GM12878 (cell line): ENCODE measurements at regions of chr12 and their contacts with region 1.

Region 1: GRCh38 chr12:43282106-43282505 is 269.9 kb downstream of the ADAMTS20 start:
- DNase-seq: no peak
- ATAC-seq: no peak
- H3K4me3 ChIP-seq: no peak overlapping the region
- H3K27ac ChIP-seq: no peak overlapping the region
- H3K4me1 ChIP-seq: peaks cover 3% of the 10 kb centered on the region; the same call in 1 of the 2 replicates
- H3K27me3 ChIP-seq: no peaks in the 10 kb centered on the region
- CTCF ChIP-seq: peak in 2 of 3 experiments; percentile 8 to 16; a peak in 2 of 6 replicates
- EP300 ChIP-seq: no peak
- POLR2A ChIP-seq: no peak
- RAD21 ChIP-seq: peak; percentile 66

Region 2: DNA sequence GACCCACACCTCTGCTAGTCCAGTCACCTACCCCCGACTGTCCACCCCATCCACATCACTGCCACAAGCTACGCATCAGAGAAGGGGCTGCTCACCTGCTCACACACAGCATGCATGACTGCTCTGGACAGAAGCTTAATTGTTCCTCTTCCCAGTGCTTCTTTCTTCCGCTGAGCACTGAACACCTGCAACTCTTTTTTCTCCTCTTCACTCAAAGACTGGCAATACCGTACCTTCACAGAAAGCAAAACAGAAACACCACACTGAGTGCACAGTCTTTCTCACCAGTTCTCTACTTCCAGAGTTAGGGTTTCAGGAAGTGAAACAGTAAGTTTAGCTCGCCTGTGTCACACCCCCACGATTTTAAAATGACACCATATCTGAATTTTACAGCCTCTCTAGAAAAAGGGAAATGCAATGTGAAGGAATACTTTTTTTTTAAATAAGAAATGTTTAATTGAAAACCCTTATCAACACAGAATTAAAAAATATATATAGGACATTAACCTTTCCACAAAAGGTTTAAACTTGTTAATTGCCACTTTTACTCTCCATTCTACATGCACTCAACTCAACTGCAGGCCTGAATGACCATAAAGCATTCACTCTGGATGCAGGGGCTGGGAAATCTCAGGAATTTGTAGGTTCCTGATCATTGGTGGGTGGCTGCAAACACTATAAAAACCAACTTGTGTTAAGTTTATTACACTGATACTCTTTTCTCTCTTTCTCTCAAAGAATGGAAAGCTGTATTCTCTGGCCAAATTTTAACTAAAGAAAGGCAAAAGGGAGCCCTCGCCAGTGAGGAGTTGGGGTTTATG is 812.5 kb before region 1 on chr12:
- CTCF ChIA-PET with region 1: interaction called, 8 read pairs
- POLR2A ChIA-PET with region 1: no interaction called
- RAD21 ChIA-PET with region 1: interaction called, 5 read pairs
- SMC1A ChIA-PET with region 1: interaction called, 26 read pairs
- in situ Hi-C with region 1: no loop called
- intact Hi-C with region 1: no loop called
- DNase-seq: peak; percentile 97
- ATAC-seq: peak; percentile 96
- H3K4me3 ChIP-seq: peak overlapping the region; percentile 52
- H3K27ac ChIP-seq: peak overlapping the region; percentile 72
- H3K4me1 ChIP-seq: peaks cover 20% of the 10 kb centered on the region
- H3K27me3 ChIP-seq: no peaks in the 10 kb centered on the region
- CTCF ChIP-seq: no peak
- EP300 ChIP-seq: peak; percentile 57 to 87; a peak in 3 of 4 replicates
- POLR2A ChIP-seq: no peak
- RAD21 ChIP-seq: no peak

Region 3: DNA sequence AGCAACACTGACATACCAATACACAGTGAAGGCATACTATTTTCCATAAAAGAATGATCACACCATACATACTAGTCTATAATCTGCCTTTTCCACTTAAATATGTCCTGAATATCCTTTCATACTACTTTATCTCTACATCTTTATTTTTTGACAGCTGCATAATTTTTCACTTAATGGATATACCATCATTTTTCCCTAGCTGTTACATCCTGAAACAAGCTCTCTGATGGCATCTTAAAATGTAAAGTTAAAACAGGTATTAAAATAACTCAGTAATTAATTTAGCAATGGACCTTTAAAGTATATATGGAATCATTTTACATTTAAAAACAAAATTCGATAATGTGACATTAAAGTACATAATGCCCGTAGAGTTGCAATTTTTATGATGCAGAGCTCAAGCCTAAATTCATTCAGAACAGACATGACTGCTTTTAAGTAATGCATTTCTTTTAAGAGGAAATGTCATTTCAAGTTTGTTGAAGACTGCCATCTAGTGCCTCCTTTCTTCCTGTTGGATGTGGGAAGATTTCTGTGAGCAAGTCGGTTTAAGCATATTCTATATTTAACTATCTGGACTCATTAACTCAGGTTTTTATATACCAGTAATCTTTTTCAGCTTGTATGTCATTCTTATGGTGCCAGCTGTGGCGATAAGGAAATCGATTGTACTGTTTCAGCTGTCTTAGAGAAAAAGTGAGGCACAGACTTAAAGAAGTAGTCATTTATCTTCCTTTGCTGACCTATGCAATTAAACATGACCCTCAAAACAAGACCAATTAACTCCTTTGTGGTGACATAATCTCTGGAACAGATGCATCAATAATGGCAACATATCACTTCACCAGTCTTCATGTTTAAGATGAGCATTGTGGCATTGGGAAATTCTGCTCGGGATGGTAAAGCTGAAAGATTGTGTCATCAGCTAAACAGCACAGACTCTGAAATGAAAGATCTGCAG is 712.9 kb before region 1 on chr12:
- CTCF ChIA-PET with region 1: interaction called, 29 read pairs
- POLR2A ChIA-PET with region 1: no interaction called
- RAD21 ChIA-PET with region 1: interaction called, 15 read pairs
- SMC1A ChIA-PET with region 1: interaction called, 9 read pairs
- in situ Hi-C with region 1: no loop called
- intact Hi-C with region 1: loop called (anchors 5 kb)
- DNase-seq: peak; percentile 38
- ATAC-seq: peak; percentile 85
- H3K4me3 ChIP-seq: no peak overlapping the region
- H3K27ac ChIP-seq: no peak overlapping the region
- H3K4me1 ChIP-seq: no peaks in the 10 kb centered on the region; the same call in 1 of the 2 replicates
- H3K27me3 ChIP-seq: no peaks in the 10 kb centered on the region
- CTCF ChIP-seq: peak; percentile 54 to 66 (median 54); a peak in 5 of 6 replicates
- EP300 ChIP-seq: no peak
- POLR2A ChIP-seq: no peak
- RAD21 ChIP-seq: peak; percentile 80

Region 4: GRCh38 chr12:42759622-42760273 is 522.4 kb before region 1 on chr12:
- CTCF ChIA-PET with region 1: no interaction called
- POLR2A ChIA-PET with region 1: no interaction called
- RAD21 ChIA-PET with region 1: no interaction called
- SMC1A ChIA-PET with region 1: no interaction called
- in situ Hi-C with region 1: no loop called
- intact Hi-C with region 1: loop called (anchors 5 kb)
- DNase-seq: no peak
- ATAC-seq: no peak
- H3K4me3 ChIP-seq: no peak overlapping the region
- H3K27ac ChIP-seq: no peak overlapping the region
- H3K4me1 ChIP-seq: peaks cover 24% of the 10 kb centered on the region
- H3K27me3 ChIP-seq: no peaks in the 10 kb centered on the region
- CTCF ChIP-seq: no peak
- EP300 ChIP-seq: no peak
- POLR2A ChIP-seq: no peak
- RAD21 ChIP-seq: no peak

Region 5: GRCh38 chr12:43221216-43221615 is 60.9 kb before region 1 on chr12:
- CTCF ChIA-PET with region 1: interaction called, 13 read pairs
- POLR2A ChIA-PET with region 1: no interaction called
- RAD21 ChIA-PET with region 1: no interaction called
- SMC1A ChIA-PET with region 1: interaction called, 7 read pairs
- in situ Hi-C with region 1: no loop called
- intact Hi-C with region 1: no loop called
- DNase-seq: no peak
- ATAC-seq: no peak
- H3K4me3 ChIP-seq: no peak overlapping the region
- H3K27ac ChIP-seq: no peak overlapping the region
- H3K4me1 ChIP-seq: no peaks in the 10 kb centered on the region
- H3K27me3 ChIP-seq: no peaks in the 10 kb centered on the region
- CTCF ChIP-seq: no peak
- EP300 ChIP-seq: no peak
- POLR2A ChIP-seq: no peak
- RAD21 ChIP-seq: no peak

Region 6: GRCh38 chr12:43306066-43306465 is 24.0 kb after region 1 on chr12:
- CTCF ChIA-PET with region 1: no interaction called
- POLR2A ChIA-PET with region 1: no interaction called
- RAD21 ChIA-PET with region 1: no interaction called
- SMC1A ChIA-PET with region 1: no interaction called
- in situ Hi-C with region 1: no loop called
- intact Hi-C with region 1: no loop called
- DNase-seq: no peak
- ATAC-seq: no peak
- H3K4me3 ChIP-seq: no peak overlapping the region
- H3K27ac ChIP-seq: no peak overlapping the region
- H3K4me1 ChIP-seq: no peaks in the 10 kb centered on the region
- H3K27me3 ChIP-seq: no peaks in the 10 kb centered on the region
- CTCF ChIP-seq: no peak
- EP300 ChIP-seq: no peak
- POLR2A ChIP-seq: no peak
- RAD21 ChIP-seq: no peak

Region 7: GRCh38 chr12:43338848-43339526 is 56.9 kb after region 1 on chr12:
- CTCF ChIA-PET with region 1: interaction called, 44 read pairs
- POLR2A ChIA-PET with region 1: no interaction called
- RAD21 ChIA-PET with region 1: interaction called, 37 read pairs
- SMC1A ChIA-PET with region 1: interaction called, 28 read pairs
- in situ Hi-C with region 1: no loop called
- intact Hi-C with region 1: loop called (anchors 5 kb)
- DNase-seq: peak; percentile 42
- ATAC-seq: peak; percentile 80
- H3K4me3 ChIP-seq: no peak overlapping the region
- H3K27ac ChIP-seq: no peak overlapping the region
- H3K4me1 ChIP-seq: peaks cover 15% of the 10 kb centered on the region
- H3K27me3 ChIP-seq: no peaks in the 10 kb centered on the region
- CTCF ChIP-seq: peak; percentile 56 to 70 (median 57)
- EP300 ChIP-seq: no peak
- POLR2A ChIP-seq: no peak
- RAD21 ChIP-seq: peak; percentile 82

Region 8: DNA sequence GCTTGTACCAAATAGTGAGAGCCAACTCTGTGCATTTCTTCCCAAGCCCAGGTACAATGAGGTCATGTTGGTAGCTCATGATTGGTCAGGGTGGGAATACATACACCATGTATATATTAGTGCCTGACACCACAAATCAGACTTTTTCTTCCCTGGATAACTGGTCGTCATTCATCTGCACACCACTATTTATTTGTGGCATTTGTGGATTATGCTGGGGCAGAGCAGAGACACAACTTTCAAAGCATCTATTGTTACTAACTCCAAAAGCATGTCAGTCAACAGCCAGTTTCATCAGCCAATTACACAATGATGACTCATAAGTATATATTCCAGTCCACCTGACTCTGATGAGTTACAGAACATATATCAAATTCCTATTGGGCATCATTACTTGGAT is 88.2 kb after region 1 on chr12:
- CTCF ChIA-PET with region 1: no interaction called
- POLR2A ChIA-PET with region 1: no interaction called
- RAD21 ChIA-PET with region 1: no interaction called
- SMC1A ChIA-PET with region 1: no interaction called
- in situ Hi-C with region 1: no loop called
- intact Hi-C with region 1: no loop called
- DNase-seq: no peak
- ATAC-seq: no peak
- H3K4me3 ChIP-seq: no peak overlapping the region
- H3K27ac ChIP-seq: no peak overlapping the region
- H3K4me1 ChIP-seq: no peaks in the 10 kb centered on the region
- H3K27me3 ChIP-seq: no peaks in the 10 kb centered on the region
- CTCF ChIP-seq: no peak
- EP300 ChIP-seq: no peak
- POLR2A ChIP-seq: no peak
- RAD21 ChIP-seq: no peak